ENCODE measurements at regions of chr10 and their contacts with region 1.

Region 1: GRCh38 chr10:10930979-10931743 is 86.5 kb upstream of the CELF2 start:
- DNase-seq: no peak
- H3K4me3 ChIP-seq: no peak overlapping the region
- H3K27ac ChIP-seq: no peak overlapping the region
- H3K4me1 ChIP-seq: no peaks in the 10 kb centered on the region
- H3K27me3 ChIP-seq: no peaks in the 10 kb centered on the region
- CTCF ChIP-seq: no peak
- POLR2A ChIP-seq: no peak

Region 2: GRCh38 chr10:10959666-10960065 is 28.5 kb after region 1 on chr10:
- CTCF ChIA-PET with region 1: no interaction called
- POLR2A ChIA-PET with region 1: no interaction called
- dilution Hi-C with region 1: no loop called
- intact Hi-C with region 1: loop called (anchors 2 kb)
- DNase-seq: no peak
- H3K4me3 ChIP-seq: no peak overlapping the region
- H3K27ac ChIP-seq: no peak overlapping the region
- H3K4me1 ChIP-seq: no peaks in the 10 kb centered on the region
- H3K27me3 ChIP-seq: no peaks in the 10 kb centered on the region
- CTCF ChIP-seq: no peak
- POLR2A ChIP-seq: no peak